ENCODE measurements at regions of chr17 and their contacts with region 1.

Region 1: GRCh38 chr17:65556014-65556909 is 5.2 kb downstream of the AXIN2 start:
- DNase-seq: peak; percentile 79 to 96 (median 88)
- ATAC-seq: peak; percentile 34
- H3K4me3 ChIP-seq: peak overlapping the region in 1 of 2 experiments; percentile 31
- H3K4me3 Mint-ChIP-seq: peak overlapping the region; percentile 58
- H3K27ac ChIP-seq: no peak overlapping the region
- H3K27ac Mint-ChIP-seq: no peak overlapping the region
- H3K4me1 ChIP-seq: peaks cover 44% of the 10 kb centered on the region
- H3K4me1 Mint-ChIP-seq: peaks cover 20% of the 10 kb centered on the region
- H3K27me3 ChIP-seq: no peaks in the 10 kb centered on the region
- H3K27me3 Mint-ChIP-seq: no peaks in the 10 kb centered on the region
- CTCF ChIP-seq: peak; percentile 90

Region 2: GRCh38 chr17:65294179-65294720 is 262.0 kb before region 1 on chr17:
- CTCF ChIA-PET with region 1: interaction called, 32 read pairs
- POLR2A ChIA-PET with region 1: no interaction called
- intact Hi-C with region 1: loop called in 1 of 2 experiments (anchors 1 kb)
- DNase-seq: peak; percentile 33 to 76 (median 61)
- ATAC-seq: peak; percentile 80
- H3K4me3 ChIP-seq: no peak overlapping the region
- H3K4me3 Mint-ChIP-seq: no peak overlapping the region
- H3K27ac ChIP-seq: no peak overlapping the region
- H3K27ac Mint-ChIP-seq: no peak overlapping the region
- H3K4me1 ChIP-seq: no peaks in the 10 kb centered on the region
- H3K4me1 Mint-ChIP-seq: peaks cover 4% of the 10 kb centered on the region
- H3K27me3 ChIP-seq: no peaks in the 10 kb centered on the region
- H3K27me3 Mint-ChIP-seq: no peaks in the 10 kb centered on the region
- CTCF ChIP-seq: peak; percentile 60

Region 3: GRCh38 chr17:65418628-65419027 is 137.6 kb before region 1 on chr17:
- CTCF ChIA-PET with region 1: interaction called, 3 read pairs
- POLR2A ChIA-PET with region 1: no interaction called
- intact Hi-C with region 1: loop called in 1 of 2 experiments (anchors 10 kb)
- DNase-seq: peak in 2 of 9 experiments; percentile 6 to 11
- ATAC-seq: no peak
- H3K4me3 ChIP-seq: no peak overlapping the region
- H3K4me3 Mint-ChIP-seq: no peak overlapping the region
- H3K27ac ChIP-seq: no peak overlapping the region
- H3K27ac Mint-ChIP-seq: no peak overlapping the region
- H3K4me1 ChIP-seq: no peaks in the 10 kb centered on the region
- H3K4me1 Mint-ChIP-seq: no peaks in the 10 kb centered on the region
- H3K27me3 ChIP-seq: peaks cover 2 to 4% of the 10 kb centered on the region in 2 experiments
- H3K27me3 Mint-ChIP-seq: peaks cover 8% of the 10 kb centered on the region
- CTCF ChIP-seq: no peak

Region 4: DNA sequence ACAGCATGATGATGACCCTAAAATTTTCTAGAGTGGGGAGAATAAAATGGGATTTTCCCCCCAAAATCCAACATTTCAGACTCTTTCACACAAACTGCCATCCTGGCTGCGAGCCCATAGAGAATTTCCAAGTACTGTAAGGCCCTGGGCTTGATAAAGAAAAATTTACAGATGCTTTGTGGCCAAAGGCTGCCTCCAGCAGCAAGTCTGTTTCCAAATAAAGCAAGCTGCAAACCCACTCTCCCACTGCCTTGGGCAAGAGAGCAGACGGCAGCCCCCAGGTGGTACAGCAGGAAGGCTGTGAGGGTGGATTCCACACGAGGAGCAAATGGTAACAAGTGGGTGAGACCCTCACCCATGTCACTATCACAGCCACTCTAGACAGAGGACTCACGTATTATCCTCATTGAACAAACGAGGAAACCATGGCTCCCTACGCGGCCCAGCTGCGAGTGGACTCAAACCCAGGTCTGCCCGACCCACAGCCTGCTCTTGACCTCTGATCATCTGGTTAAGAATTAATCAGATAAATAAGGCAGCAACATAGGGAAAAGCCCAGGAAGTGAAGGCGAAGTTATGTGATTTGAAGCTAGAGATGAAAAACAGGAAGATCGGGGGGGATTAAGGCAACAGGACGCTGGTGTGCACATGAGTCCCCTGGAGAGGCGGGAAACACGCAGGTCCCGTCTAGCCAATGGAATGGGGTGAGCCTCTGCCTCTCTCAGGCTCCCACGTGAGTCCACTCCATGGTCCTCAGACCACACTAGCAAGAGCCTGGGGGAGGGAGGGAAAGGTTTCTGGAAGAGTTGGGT is 32.2 kb before region 1 on chr17:
- CTCF ChIA-PET with region 1: no interaction called
- POLR2A ChIA-PET with region 1: interaction called, 7 read pairs
- intact Hi-C with region 1: loop called (anchors 1 to 2 kb)
- DNase-seq: peak in 1 of 9 experiments; percentile 30
- ATAC-seq: peak; percentile 12
- H3K4me3 ChIP-seq: no peak overlapping the region
- H3K4me3 Mint-ChIP-seq: peak overlapping the region; percentile 5
- H3K27ac ChIP-seq: no peak overlapping the region
- H3K27ac Mint-ChIP-seq: peak overlapping the region; percentile 72
- H3K4me1 ChIP-seq: peaks cover 22% of the 10 kb centered on the region
- H3K4me1 Mint-ChIP-seq: peaks cover 31% of the 10 kb centered on the region
- H3K27me3 ChIP-seq: no peaks in the 10 kb centered on the region
- H3K27me3 Mint-ChIP-seq: no peaks in the 10 kb centered on the region
- CTCF ChIP-seq: no peak

Region 5: GRCh38 chr17:65638221-65638975 is 82.1 kb after region 1 on chr17:
- CTCF ChIA-PET with region 1: no interaction called
- POLR2A ChIA-PET with region 1: no interaction called
- intact Hi-C with region 1: no loop called
- DNase-seq: no peak
- ATAC-seq: no peak
- H3K4me3 ChIP-seq: no peak overlapping the region
- H3K4me3 Mint-ChIP-seq: no peak overlapping the region
- H3K27ac ChIP-seq: no peak overlapping the region
- H3K27ac Mint-ChIP-seq: peak overlapping the region; percentile 34
- H3K4me1 ChIP-seq: no peaks in the 10 kb centered on the region
- H3K4me1 Mint-ChIP-seq: no peaks in the 10 kb centered on the region
- H3K27me3 ChIP-seq: no peaks in the 10 kb centered on the region
- H3K27me3 Mint-ChIP-seq: no peaks in the 10 kb centered on the region
- CTCF ChIP-seq: no peak

Region 6: GRCh38 chr17:65794572-65794971 is 238.3 kb after region 1 on chr17:
- CTCF ChIA-PET with region 1: interaction called, 5 read pairs
- POLR2A ChIA-PET with region 1: no interaction called
- intact Hi-C with region 1: loop called in 1 of 2 experiments (anchors 10 kb)
- DNase-seq: peak in 2 of 9 experiments; percentile 22 to 44
- ATAC-seq: no peak
- H3K4me3 ChIP-seq: no peak overlapping the region
- H3K4me3 Mint-ChIP-seq: no peak overlapping the region
- H3K27ac ChIP-seq: no peak overlapping the region
- H3K27ac Mint-ChIP-seq: no peak overlapping the region
- H3K4me1 ChIP-seq: no peaks in the 10 kb centered on the region
- H3K4me1 Mint-ChIP-seq: no peaks in the 10 kb centered on the region
- H3K27me3 ChIP-seq: no peaks in the 10 kb centered on the region
- H3K27me3 Mint-ChIP-seq: no peaks in the 10 kb centered on the region
- CTCF ChIP-seq: peak; percentile 53